Activated CD4-positive, alpha-beta T cell treated with anti-CD3 and anti-CD28 coated beads, Interleukin-2, amount 10 ng/mL, durations not matched to agents 24 days and 14 days (primary cell): ENCODE measurements at regions of chr18 and their contacts with region 1.

Region 1: GRCh38 chr18:43049021-43049420 is 66.5 kb downstream of the RIT2 start:
- DNase-seq: no peak
- H3K4me3 Mint-ChIP-seq: no peak overlapping the region
- H3K27ac Mint-ChIP-seq: no peak overlapping the region
- H3K4me1 Mint-ChIP-seq: no peaks in the 10 kb centered on the region
- H3K27me3 Mint-ChIP-seq: no peaks in the 10 kb centered on the region

Region 2: DNA sequence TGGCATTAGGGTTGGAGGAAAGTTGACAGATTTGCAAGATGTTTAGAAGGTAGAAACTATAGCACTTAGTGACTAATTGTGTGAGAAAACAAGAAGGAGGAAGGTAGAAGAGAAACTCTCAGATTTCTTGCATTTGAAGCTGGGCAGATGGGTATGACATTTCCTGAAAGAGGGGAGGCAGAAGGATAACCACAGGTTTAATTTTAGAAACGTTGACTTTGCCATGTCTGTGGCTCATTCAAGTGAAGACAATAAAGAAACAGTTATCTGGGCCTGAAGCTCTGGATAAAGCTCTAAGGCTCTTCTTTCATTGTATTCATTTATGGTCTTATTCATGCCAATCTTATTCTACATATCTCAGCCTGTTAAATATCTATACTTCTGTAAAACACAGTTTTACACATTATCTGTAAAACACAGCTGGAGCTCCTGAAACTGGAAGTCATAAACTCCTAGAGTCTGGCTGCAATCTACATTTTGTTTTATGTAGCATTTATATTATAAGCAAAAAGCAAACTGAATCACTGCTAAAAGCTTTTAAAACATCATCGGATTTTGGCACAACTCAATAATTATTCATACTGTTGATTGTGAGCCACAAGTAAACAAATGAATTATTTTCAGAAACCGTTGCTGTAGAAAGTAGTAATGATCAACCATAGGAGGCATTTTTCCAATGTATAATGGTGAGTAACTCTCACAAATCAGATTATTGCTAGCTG is 72.0 kb before region 1 on chr18:
- intact Hi-C with region 1: loop called (anchors 10 kb)
- DNase-seq: no peak
- H3K4me3 Mint-ChIP-seq: no peak overlapping the region
- H3K27ac Mint-ChIP-seq: no peak overlapping the region
- H3K4me1 Mint-ChIP-seq: no peaks in the 10 kb centered on the region
- H3K27me3 Mint-ChIP-seq: no peaks in the 10 kb centered on the region

Region 3: DNA sequence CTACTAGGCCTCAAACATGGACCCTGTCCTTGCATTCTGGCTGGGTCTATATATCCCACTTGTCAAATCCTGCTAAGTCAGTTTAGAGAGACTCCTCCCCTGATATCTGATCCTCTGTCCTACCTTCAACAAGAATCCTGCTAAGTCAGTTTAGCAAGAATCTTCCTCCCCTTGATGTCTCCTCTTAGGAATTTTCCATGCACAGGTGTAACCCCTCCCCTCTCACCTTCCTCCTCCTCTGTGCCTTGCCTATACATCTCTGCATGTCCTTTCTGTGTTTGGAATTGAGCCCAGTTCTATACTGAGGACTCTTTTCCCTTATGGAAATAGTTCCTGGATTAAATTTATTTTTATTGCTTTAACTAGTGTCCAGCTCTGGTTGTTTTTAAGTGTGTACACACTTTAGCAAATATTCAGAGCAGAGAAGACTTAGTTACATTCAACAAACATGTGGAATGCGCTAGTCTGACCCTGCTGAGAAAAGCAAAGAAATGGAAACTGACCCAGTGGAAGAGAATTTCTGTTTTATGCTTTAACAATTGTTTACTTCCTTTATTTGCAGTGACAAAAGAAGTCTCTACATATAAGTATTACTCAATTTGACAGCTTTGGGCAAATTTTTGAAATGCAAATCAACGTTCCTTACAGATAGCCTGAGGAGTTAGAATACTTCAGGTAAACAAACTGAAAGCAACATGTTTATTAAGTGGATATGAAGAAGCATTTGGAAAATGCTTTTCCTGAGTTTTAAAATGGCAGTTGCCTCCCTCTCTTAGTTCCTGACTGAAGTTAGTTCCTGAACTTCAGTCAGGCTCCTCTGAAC is 14.1 kb before region 1 on chr18:
- intact Hi-C with region 1: no loop called
- DNase-seq: no peak
- H3K4me3 Mint-ChIP-seq: no peak overlapping the region
- H3K27ac Mint-ChIP-seq: no peak overlapping the region
- H3K4me1 Mint-ChIP-seq: no peaks in the 10 kb centered on the region
- H3K27me3 Mint-ChIP-seq: no peaks in the 10 kb centered on the region

Region 4: DNA sequence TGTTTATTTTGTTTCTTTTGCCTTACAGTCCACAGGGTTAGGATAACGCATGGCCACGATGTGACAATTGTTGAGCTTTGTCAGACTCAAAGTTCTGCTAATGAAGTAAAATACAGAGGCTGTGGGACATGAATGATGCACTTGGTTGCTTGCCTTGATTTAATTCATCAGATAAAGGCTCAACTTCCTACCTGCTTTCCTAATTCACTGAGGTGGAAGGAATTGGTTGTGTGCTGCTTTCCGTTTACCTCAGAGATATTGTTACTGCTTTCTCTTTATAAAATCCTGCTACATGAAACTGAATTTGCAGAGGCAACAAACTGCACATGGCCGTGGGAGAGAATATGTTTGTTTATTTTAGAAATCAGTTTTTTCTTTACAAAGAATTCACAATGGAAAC is 59.9 kb after region 1 on chr18:
- intact Hi-C with region 1: no loop called
- DNase-seq: no peak
- H3K4me3 Mint-ChIP-seq: no peak overlapping the region
- H3K27ac Mint-ChIP-seq: no peak overlapping the region
- H3K4me1 Mint-ChIP-seq: no peaks in the 10 kb centered on the region
- H3K27me3 Mint-ChIP-seq: no peaks in the 10 kb centered on the region

Region 5: DNA sequence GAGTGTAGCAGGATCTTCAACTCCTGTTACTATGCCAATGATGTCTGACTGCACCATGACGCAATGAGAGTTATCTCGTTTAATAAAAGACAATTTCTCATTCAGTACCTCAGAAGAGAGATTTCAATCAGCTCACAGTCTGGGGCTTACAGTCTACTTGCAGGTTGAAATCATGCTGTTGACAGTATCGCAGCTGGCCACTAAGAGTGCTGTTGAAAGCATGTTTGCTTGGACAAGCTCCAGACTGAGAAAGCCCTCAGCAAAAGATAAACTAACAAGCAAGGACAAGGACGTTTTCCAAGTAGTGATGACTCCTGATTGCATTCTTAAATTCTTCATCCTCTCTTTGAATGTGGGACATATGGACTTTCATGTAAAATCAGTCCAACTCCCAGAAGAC is 373.5 kb after region 1 on chr18:
- intact Hi-C with region 1: no loop called
- DNase-seq: no peak
- H3K4me3 Mint-ChIP-seq: no peak overlapping the region
- H3K27ac Mint-ChIP-seq: no peak overlapping the region
- H3K4me1 Mint-ChIP-seq: no peaks in the 10 kb centered on the region
- H3K27me3 Mint-ChIP-seq: no peaks in the 10 kb centered on the region